ENCODE measurements at regions of chr1 and their contacts with region 1.

Region 1: GRCh38 chr1:206716870-206717673 is 32.4 kb downstream of the MAPKAPK2 start:
- DNase-seq: peak; percentile 51
- CTCF ChIP-seq: no peak

Region 2: DNA sequence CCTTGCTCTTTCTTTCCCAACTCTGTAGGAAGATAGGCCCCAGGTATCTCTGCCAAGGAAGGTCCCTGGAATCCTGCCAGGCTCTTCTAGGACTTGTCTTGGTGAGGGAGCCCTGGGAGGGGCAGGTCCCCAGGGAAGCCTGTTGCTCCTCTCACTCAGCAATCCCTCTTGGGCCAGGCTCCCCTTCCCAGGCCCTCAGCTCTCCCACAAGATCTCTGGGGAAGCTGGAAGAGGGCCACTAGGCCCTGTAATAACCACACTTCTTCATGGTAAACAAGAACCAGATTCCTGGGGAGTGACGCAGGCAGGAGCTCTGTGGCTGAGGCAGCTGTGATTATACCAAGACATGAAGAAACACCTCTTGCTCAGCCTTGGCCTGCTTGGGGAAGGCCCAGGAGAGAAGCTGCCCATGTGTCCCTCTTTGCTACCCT is 42.3 kb before region 1 on chr1:
- CTCF ChIA-PET with region 1: no interaction called
- POLR2A ChIA-PET with region 1: no interaction called
- DNase-seq: no peak
- CTCF ChIP-seq: no peak

Region 3: DNA sequence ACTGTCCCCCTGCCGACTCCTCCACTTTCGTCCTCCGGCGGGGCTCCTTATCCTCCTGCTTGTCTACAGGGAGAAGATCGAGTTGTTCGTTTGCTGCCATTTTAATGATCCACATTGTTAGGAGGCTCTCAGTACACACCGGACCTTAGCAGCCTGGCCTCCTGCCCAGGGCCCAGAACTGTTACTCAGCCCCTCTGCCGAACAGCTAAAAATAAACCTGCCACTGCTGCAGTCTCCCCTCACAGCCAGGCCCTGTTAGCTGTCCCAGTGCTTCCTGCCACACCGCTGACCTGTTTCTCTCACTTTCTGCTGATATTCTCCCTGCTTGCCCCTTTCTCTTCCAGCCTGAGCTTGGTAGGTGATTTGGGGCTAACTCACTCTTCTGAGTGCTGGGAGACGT is 24.0 kb before region 1 on chr1:
- CTCF ChIA-PET with region 1: interaction called, 40 read pairs
- POLR2A ChIA-PET with region 1: interaction called, 3 read pairs
- DNase-seq: no peak
- CTCF ChIP-seq: no peak

Region 4: GRCh38 chr1:206706298-206706791 is 10.7 kb before region 1 on chr1:
- CTCF ChIA-PET with region 1: interaction called, 87 read pairs
- POLR2A ChIA-PET with region 1: interaction called, 3 read pairs
- DNase-seq: no peak
- CTCF ChIP-seq: no peak